Activated CD8-positive, alpha-beta T cell treated with anti-CD3 and anti-CD28 coated beads, Interleukin-2, amount 10 ng/mL, durations not matched to agents 7 days and 5 days (primary cell): ENCODE measurements at regions of chr11 and their contacts with region 1.

Region 1: DNA sequence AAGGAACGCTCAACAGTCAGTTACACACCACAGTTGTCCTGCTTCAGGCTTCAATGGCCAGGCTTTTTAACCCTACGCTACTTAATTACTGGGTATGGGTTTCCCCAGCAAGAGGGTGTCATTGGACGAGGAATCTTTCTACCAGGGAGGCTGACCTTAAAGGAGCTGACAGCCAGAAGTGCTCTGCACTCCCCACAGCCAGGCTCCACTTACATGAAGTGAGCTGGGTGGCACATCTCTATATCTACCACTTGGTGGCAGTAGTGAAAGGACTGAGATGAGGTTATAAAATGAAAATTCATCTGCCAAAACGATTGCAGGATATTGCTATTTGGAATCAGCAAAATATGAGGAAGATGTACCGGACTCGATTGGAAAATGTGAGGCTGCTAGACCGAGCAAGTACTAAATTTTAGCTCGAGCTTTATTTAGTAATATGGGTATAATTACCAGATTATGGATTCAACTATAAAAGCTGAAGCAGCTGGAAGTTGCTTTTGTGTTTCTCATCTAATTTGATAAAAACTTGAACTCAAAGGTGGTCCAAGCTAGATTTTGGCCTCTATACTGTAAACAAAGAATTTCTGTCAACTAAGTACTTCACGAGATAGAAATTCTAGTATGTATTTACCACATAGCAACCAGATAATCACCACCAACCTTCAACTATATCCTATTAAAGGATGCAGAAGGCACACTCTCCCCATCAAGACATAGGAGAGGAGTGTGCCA is 53.9 kb upstream of the CEP126 start:
- DNase-seq: peak; percentile 40
- ATAC-seq: peak; percentile 76
- H3K4me3 Mint-ChIP-seq: no peak overlapping the region
- H3K27ac Mint-ChIP-seq: no peak overlapping the region
- H3K4me1 Mint-ChIP-seq: no peaks in the 10 kb centered on the region
- H3K27me3 Mint-ChIP-seq: peaks cover 2% of the 10 kb centered on the region

Region 2: DNA sequence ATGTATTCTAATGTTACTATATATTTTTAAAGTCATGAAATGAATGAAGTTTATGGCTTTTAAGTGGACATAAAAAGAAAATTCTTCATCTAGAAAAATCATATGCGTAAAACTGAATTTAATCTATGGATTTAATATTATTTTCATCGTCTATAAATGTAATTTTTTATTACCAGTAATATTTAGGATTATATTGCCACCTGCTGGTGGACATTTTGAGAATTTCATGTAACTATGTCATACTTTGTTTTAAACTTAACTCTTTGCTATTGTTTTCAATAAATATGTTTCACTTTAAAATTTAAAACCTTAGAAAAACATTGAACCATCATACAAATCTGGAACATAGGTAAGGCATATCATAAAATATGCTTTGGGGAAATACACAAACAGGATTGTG is 12.6 kb before region 1 on chr11:
- CTCF ChIA-PET with region 1: interaction called, 14 read pairs
- POLR2A ChIA-PET with region 1: no interaction called
- DNase-seq: no peak
- ATAC-seq: no peak
- H3K4me3 Mint-ChIP-seq: no peak overlapping the region
- H3K27ac Mint-ChIP-seq: no peak overlapping the region
- H3K4me1 Mint-ChIP-seq: no peaks in the 10 kb centered on the region
- H3K27me3 Mint-ChIP-seq: peaks cover 2% of the 10 kb centered on the region

Region 3: GRCh38 chr11:101880222-101880621 is 19.4 kb after region 1 on chr11:
- CTCF ChIA-PET with region 1: interaction called, 16 read pairs
- POLR2A ChIA-PET with region 1: no interaction called
- DNase-seq: no peak
- ATAC-seq: no peak
- H3K4me3 Mint-ChIP-seq: no peak overlapping the region
- H3K27ac Mint-ChIP-seq: no peak overlapping the region
- H3K4me1 Mint-ChIP-seq: no peaks in the 10 kb centered on the region
- H3K27me3 Mint-ChIP-seq: no peaks in the 10 kb centered on the region

Region 4: GRCh38 chr11:101907815-101908214 is 47.0 kb after region 1 on chr11:
- CTCF ChIA-PET with region 1: no interaction called
- POLR2A ChIA-PET with region 1: no interaction called
- DNase-seq: no peak
- ATAC-seq: no peak
- H3K4me3 Mint-ChIP-seq: no peak overlapping the region
- H3K27ac Mint-ChIP-seq: no peak overlapping the region
- H3K4me1 Mint-ChIP-seq: no peaks in the 10 kb centered on the region
- H3K27me3 Mint-ChIP-seq: peaks cover 13% of the 10 kb centered on the region

Region 5: GRCh38 chr11:102007567-102008437 is 146.9 kb after region 1 on chr11:
- CTCF ChIA-PET with region 1: interaction called, 89 read pairs
- POLR2A ChIA-PET with region 1: interaction called, 4 read pairs
- DNase-seq: no peak
- ATAC-seq: peak; percentile 60
- H3K4me3 Mint-ChIP-seq: no peak overlapping the region
- H3K27ac Mint-ChIP-seq: no peak overlapping the region
- H3K4me1 Mint-ChIP-seq: peaks cover 4% of the 10 kb centered on the region
- H3K27me3 Mint-ChIP-seq: peaks cover 10% of the 10 kb centered on the region

Region 6: DNA sequence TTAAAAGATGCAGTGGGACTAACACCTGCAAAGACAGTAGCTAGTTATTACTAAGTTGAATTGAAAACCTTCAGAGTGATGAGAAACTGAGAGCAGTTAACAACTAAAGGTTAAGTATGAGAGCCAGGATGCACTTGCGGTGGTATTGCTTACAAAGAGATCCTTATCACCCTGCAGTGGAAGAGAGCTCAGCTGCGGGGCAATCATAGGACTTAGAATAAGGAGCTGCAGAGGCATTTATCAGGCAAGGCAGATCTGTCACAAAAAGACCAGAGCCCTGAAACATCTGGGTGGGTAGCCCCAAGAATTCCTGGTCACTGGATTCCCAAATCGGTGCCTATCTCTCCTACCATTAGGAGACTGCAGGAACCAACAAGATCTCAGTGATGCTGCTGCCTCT is 152.1 kb after region 1 on chr11:
- CTCF ChIA-PET with region 1: interaction called, 89 read pairs
- POLR2A ChIA-PET with region 1: interaction called, 4 read pairs
- DNase-seq: peak; percentile 35
- ATAC-seq: peak; percentile 73
- H3K4me3 Mint-ChIP-seq: no peak overlapping the region
- H3K27ac Mint-ChIP-seq: no peak overlapping the region
- H3K4me1 Mint-ChIP-seq: peaks cover 5% of the 10 kb centered on the region
- H3K27me3 Mint-ChIP-seq: peaks cover 10% of the 10 kb centered on the region

Region 7: GRCh38 chr11:102476812-102477211 is 616.0 kb after region 1 on chr11:
- CTCF ChIA-PET with region 1: no interaction called
- POLR2A ChIA-PET with region 1: no interaction called
- DNase-seq: peak; percentile 69
- ATAC-seq: peak; percentile 97
- H3K4me3 Mint-ChIP-seq: peak overlapping the region; percentile 12
- H3K27ac Mint-ChIP-seq: peak overlapping the region; percentile 90
- H3K4me1 Mint-ChIP-seq: peaks cover 57% of the 10 kb centered on the region
- H3K27me3 Mint-ChIP-seq: no peaks in the 10 kb centered on the region